ENCODE measurements at regions of chr11 and their contacts with region 1.

Region 1: DNA sequence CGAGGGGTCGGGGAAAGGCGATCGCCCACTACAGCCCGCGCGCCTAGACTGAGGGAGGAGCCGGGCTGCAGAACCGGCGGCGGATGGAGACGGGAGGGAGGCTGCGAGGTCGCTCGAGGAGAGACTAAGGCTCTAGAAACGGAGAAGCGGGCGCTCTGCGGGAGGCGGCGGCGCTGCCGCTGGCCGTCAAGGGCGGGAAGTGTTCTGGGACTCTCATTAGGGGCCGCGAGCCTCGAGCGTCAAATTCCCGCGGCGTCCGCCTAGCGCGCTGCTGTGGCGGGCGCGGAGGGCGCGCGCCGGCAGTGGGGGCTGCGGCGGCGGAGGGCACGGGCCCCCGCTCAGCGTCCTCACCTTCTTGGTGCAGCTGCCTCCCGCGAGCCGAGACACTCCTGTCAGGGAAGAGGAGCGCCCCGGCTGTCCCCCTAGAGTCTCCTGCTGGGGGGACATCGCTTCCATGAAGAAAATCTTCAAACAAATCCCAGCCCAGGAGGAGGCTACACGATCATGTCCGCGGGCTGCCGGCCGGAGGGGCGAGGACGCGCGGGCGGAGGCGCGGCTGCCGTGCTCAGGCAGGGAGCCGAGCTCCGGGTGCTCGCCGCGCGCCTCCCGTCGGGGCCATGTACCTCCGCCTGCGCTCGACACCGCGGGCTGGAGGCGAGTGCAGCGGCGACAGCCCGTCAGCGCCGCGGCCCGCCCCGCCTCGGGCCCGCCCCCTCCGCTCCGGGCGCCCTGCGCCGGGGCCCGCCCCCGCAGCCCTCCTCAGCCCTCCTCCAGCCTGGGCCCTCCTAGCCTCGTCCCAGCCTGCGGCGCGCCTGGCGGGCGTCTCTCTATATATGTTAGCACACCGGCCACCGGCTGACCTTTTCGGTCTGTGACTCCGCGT is at the start of gene ARHGAP20:
- DNase-seq: peak; percentile 42
- H3K4me3 ChIP-seq: peak within 1 kb of the TSS; percentile 49 to 55
- H3K27ac ChIP-seq: peak within 1 kb of the TSS; percentile 54 to 72
- H3K4me1 ChIP-seq: no peaks in the 10 kb centered on the region
- H3K27me3 ChIP-seq: no peaks in the 10 kb centered on the region
- CTCF ChIP-seq: no peak
- POLR2A ChIP-seq: peak; percentile 31
- total RNA-seq, gene ARHGAP20: 3.7 to 26.8 TPM

Region 2: GRCh38 chr11:110613197-110613918 is 98.7 kb before region 1 on chr11:
- intact Hi-C with region 1: no loop called
- DNase-seq: no peak
- H3K4me3 ChIP-seq: no peak overlapping the region
- H3K27ac ChIP-seq: no peak overlapping the region
- H3K4me1 ChIP-seq: no peaks in the 10 kb centered on the region
- H3K27me3 ChIP-seq: no peaks in the 10 kb centered on the region
- CTCF ChIP-seq: no peak
- POLR2A ChIP-seq: no peak

Region 3: DNA sequence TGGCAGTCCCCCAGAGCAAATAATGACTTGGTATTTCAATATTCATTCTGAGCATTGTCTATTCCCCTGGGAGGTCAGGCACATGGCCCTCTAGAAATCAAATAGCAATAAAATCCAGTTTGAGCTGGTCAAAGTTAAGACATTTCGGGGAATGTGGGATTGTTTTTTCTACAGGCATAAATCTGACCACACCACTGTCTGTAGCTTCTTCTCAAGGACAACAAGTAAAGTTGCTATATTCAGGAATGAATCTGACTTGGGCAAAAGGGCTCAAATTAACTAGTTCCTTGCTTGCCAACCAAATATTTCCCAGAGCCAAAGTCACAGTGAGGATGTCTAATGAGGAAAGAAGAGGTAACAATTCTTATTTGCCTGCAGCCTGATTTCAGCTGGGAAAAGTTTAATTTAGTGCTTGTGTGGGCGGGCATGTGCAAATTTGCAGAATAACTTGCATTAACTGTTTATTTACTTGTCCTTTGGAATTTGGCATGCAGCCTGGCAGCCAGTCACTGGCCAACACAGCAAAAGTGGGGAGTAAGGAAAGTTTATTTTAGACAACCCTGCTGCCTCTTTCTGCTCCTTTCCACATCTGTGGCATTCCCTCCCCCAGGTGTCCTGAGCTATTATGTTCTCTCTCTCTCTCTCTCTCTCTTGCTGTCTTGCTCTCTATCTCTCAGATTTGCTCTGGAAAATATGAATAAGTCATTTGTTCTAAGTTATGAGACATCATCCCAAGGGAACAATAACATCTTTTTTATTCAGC is 51.4 kb after region 1 on chr11:
- intact Hi-C with region 1: no loop called
- DNase-seq: peak; percentile 29
- H3K4me3 ChIP-seq: no peak overlapping the region
- H3K27ac ChIP-seq: peak overlapping the region; percentile 3 to 19
- H3K4me1 ChIP-seq: no peaks in the 10 kb centered on the region
- H3K27me3 ChIP-seq: no peaks in the 10 kb centered on the region
- CTCF ChIP-seq: no peak
- POLR2A ChIP-seq: no peak

Region 4: DNA sequence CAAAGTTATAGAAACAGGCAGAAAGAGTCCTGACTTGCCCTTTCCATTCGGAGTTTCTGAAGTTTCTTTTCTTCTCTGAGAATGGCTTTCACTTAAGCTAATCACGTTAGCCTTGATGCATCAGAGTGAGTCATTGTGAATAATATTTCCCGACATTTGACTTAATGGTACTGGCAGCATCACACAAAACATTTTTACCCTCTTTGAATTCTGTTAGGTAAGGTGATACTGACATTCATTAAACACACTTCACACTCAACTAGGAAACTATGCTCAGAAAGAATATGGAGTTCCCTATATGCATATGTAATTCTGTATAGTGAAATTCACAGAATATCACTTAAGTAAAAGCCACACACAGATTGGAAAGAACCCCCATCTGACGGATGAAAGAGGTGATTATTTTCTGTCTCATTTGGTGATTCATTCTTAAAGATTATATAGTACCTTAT is 121.0 kb after region 1 on chr11:
- intact Hi-C with region 1: no loop called
- DNase-seq: no peak
- H3K4me3 ChIP-seq: no peak overlapping the region
- H3K27ac ChIP-seq: no peak overlapping the region
- H3K4me1 ChIP-seq: no peaks in the 10 kb centered on the region
- H3K27me3 ChIP-seq: no peaks in the 10 kb centered on the region
- CTCF ChIP-seq: no peak
- POLR2A ChIP-seq: no peak

Region 5: DNA sequence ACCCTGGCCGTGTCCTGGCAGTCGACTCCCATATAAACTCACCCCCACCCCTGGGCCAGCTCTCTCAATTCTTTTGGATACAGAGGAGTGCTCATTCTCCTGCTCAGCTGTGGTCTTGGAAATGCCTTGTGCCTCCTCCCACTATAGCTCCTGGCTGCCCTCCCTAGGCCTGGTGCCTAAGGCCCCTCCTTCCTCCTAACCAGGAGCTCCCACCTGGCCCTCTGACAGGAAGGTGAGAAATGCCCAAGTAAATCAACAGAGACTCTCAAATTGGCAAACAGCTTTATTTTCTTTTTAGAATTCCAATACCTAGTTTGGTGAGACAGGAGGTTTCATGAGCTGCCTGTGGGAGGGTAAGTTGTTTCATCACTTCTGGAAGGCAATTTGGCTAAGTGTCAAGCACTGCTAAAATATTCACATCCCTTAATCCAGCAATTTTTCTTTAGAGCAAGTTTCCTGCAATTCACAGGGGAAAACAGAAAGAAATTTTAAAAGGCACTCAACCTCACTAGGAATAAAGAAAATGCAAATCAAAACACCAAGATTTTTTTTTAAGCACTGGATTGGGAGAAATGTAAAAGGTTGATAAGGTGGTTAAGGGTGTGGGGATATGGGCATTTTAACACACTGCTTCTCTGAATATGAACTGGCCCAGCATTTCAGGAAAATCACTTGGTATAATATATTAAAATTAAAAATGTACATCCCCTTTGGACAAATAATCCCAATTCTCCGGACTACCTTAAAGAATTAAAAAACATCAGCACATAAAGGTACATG is 209.9 kb after region 1 on chr11:
- intact Hi-C with region 1: loop called (anchors 5 kb)
- DNase-seq: peak; percentile 82
- H3K4me3 ChIP-seq: no peak overlapping the region
- H3K27ac ChIP-seq: peak overlapping the region; percentile 51
- H3K4me1 ChIP-seq: no peaks in the 10 kb centered on the region
- H3K27me3 ChIP-seq: no peaks in the 10 kb centered on the region
- CTCF ChIP-seq: no peak
- POLR2A ChIP-seq: no peak

Region 6: GRCh38 chr11:111230122-111230465 is 518.1 kb after region 1 on chr11:
- intact Hi-C with region 1: loop called (anchors 2 kb)
- DNase-seq: no peak
- H3K4me3 ChIP-seq: no peak overlapping the region
- H3K27ac ChIP-seq: no peak overlapping the region
- H3K4me1 ChIP-seq: no peaks in the 10 kb centered on the region
- H3K27me3 ChIP-seq: no peaks in the 10 kb centered on the region
- CTCF ChIP-seq: no peak
- POLR2A ChIP-seq: no peak

Region 7: DNA sequence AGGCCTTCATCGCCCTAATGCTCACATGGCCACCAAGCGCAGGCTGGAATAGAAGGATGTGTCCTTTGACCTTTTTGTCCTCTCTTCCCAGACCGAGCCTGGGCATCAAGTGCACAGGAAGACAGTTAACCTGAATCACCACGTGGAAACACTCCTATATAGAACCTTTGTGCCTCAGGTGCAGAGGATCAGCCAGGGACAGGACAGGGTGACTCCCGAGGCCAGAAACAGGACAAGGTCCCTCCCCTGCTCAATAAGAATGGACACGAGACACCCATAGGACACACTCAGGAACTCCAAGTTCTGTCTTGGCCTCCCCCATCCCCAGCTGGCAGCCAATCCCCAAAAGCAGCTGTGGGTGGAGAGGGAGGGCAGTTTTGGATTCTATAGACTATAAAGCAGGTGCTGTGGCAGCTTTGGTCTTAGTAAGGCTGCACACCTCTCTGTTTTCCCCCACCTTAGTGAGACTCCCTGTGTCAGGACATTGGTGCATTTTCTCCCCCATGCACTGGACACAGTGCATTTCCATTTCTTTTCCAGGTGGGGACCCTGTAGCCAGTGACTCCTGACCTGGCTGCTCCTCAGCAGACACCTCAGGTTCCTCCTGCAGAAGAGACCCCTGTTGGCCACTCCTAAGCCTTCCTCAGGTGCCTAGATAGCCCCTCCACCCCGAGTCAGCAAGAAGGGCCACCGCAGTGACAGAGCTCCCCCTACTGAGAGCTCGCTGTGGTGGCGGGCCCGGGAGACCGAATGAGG is 710.7 kb after region 1 on chr11:
- intact Hi-C with region 1: loop called (anchors 10 kb)
- DNase-seq: peak; percentile 59
- H3K4me3 ChIP-seq: no peak overlapping the region
- H3K27ac ChIP-seq: no peak overlapping the region
- H3K4me1 ChIP-seq: peaks cover 6% of the 10 kb centered on the region
- H3K27me3 ChIP-seq: no peaks in the 10 kb centered on the region
- CTCF ChIP-seq: peak; percentile 50 to 86 (median 76)
- POLR2A ChIP-seq: no peak

Measured in prostate gland (tissue), 2 donors.